ENCODE measurements at regions of chr6 and their contacts with region 1.

Region 1: DNA sequence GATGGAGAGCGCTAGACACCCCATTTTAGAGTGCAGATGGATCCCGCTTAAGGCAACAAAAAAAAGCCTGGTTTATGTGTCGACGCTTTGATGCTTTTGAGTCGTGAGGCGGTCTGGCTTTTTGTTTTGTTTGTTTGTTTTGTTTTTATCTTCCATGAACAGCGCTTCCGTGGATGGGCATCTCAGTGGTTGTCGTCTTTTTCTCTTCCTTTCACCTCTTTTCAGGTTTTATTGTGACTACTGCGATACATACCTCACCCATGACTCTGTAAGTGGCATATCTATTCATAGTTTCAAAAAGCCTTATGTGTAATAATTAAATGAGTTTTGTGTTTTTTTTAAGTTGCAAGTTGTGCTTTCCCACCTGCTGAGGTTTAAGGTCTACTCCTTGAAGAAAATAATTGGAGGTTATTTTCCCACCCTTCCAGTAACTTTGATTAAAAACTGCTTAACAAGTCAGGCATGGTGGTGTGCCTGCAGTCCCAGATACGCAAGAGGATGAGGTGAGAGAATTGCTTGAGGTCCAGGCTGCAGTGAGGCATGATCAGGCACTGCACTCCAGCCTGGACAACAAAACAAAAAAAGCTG is 476 bp downstream of the SNRPC start:
- DNase-seq: no peak
- H3K4me3 Mint-ChIP-seq: no peak overlapping the region
- H3K27ac Mint-ChIP-seq: no peak overlapping the region
- H3K4me1 Mint-ChIP-seq: peaks cover 9% of the 10 kb centered on the region
- H3K27me3 Mint-ChIP-seq: no peaks in the 10 kb centered on the region

Region 2: GRCh38 chr6:34236131-34236996 is 521.4 kb before region 1 on chr6 and contains the start of gene HMGA1:
- CTCF ChIA-PET with region 1: no interaction called
- POLR2A ChIA-PET with region 1: no interaction called
- intact Hi-C with region 1: loop called (anchors 5 kb)
- DNase-seq: peak; percentile 91
- H3K4me3 Mint-ChIP-seq: peak within 1 kb of the TSS; percentile 88
- H3K27ac Mint-ChIP-seq: peak within 1 kb of the TSS; percentile 93
- H3K4me1 Mint-ChIP-seq: peaks cover 41% of the 10 kb centered on the region
- H3K27me3 Mint-ChIP-seq: no peaks in the 10 kb centered on the region
- total RNA-seq, gene HMGA1: 422 to 429 TPM

Region 3: GRCh38 chr6:34656378-34657036 is 101.3 kb before region 1 on chr6:
- CTCF ChIA-PET with region 1: interaction called, 5 read pairs
- POLR2A ChIA-PET with region 1: interaction called, 7 read pairs
- intact Hi-C with region 1: loop called (anchors 1 kb)
- DNase-seq: peak; percentile 74
- H3K4me3 Mint-ChIP-seq: peak overlapping the region; percentile 67
- H3K27ac Mint-ChIP-seq: peak overlapping the region; percentile 93
- H3K4me1 Mint-ChIP-seq: peaks cover 54% of the 10 kb centered on the region
- H3K27me3 Mint-ChIP-seq: no peaks in the 10 kb centered on the region

Region 4: DNA sequence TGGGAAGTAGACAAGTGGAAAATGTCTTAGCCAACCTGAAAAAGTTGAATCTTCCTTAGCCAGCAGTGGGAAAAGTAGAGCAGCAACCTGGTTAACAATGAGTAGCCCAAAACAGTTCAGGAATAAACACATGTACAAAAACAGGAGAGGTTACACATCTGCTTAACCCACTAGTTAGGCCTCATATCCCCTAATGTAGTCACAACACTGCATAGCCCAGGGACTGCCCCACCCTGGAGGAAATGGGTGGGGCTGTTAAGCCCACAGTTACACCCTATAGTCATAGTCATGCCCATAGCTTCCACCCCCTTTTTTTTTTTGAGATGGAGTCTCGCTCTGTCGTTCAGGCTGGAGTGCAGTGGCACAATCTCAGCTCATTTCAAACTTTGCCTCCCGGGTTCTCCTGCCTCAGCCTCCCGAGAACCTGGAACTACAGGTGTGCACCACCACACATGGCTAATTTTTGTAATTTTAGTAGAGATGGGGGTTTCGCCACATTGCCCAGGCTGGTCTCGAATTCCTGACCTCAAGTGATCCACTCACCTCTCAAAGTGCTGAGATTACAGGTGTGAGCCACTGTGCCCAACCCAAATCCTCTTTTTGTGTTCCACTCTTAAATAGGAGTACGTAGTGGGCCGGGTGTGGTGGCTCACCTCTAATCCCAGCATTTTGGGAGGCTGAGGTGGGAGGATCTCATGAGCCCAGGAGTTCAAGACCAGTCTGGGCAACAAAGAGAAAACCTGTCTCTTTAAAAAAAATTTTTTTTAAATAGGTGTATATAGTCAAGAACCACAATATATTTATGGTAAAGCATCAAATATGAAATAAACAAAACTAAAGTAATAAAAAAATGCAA is 85.8 kb before region 1 on chr6:
- CTCF ChIA-PET with region 1: interaction called, 4 read pairs
- POLR2A ChIA-PET with region 1: interaction called, 3 read pairs
- intact Hi-C with region 1: loop called (anchors 1 kb)
- DNase-seq: peak; percentile 87
- H3K4me3 Mint-ChIP-seq: peak overlapping the region; percentile 71
- H3K27ac Mint-ChIP-seq: peak overlapping the region; percentile 92
- H3K4me1 Mint-ChIP-seq: peaks cover 60% of the 10 kb centered on the region
- H3K27me3 Mint-ChIP-seq: no peaks in the 10 kb centered on the region

Region 5: DNA sequence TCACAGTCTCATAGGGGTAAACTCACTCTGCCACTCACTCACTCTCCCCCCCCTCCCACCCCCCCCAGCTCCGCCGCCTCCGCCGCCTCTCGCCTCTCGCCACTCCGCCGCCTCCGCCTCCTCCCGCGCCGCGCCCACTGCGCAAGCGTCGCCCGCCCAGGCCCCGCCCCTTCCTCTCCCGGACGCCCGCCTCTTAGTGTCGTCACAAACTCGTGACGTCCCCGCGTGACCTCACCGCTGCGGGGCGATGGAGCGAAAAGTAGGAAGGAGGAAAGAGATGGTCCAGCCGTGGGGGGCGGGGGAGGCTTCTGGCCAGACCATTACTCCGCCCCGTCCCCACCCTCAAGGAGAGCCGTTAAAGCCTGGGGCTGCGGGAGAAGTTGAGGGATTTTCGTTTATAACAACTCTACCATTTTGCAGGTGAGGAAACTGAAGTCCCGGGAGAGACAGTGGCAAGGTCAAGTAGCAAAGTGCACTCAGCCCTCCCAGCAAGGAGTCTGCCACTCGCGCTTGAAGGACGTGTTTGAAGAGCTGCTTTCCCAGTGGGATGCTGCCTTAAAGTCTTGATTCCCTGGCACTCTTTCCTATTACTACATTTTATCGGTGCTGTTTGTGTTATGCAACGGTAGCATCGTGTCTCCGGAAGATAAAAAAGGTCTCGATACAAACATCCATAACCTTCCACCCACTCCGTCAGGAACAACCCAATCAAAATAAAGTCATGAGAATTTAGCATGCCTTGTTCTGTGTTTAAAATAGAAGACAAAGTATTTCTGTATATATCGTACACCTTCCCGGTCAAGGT is 60.8 kb before region 1 on chr6 and contains the start of gene ILRUN:
- CTCF ChIA-PET with region 1: interaction called, 7 read pairs
- POLR2A ChIA-PET with region 1: interaction called, 5 read pairs
- intact Hi-C with region 1: loop called (anchors 1 kb)
- DNase-seq: peak; percentile 97
- H3K4me3 Mint-ChIP-seq: peak within 1 kb of the TSS; percentile 87
- H3K27ac Mint-ChIP-seq: peak within 1 kb of the TSS; percentile 90
- H3K4me1 Mint-ChIP-seq: peaks cover 47% of the 10 kb centered on the region
- H3K27me3 Mint-ChIP-seq: no peaks in the 10 kb centered on the region
- total RNA-seq, gene ILRUN: 62.3 to 65.2 TPM

Region 6: DNA sequence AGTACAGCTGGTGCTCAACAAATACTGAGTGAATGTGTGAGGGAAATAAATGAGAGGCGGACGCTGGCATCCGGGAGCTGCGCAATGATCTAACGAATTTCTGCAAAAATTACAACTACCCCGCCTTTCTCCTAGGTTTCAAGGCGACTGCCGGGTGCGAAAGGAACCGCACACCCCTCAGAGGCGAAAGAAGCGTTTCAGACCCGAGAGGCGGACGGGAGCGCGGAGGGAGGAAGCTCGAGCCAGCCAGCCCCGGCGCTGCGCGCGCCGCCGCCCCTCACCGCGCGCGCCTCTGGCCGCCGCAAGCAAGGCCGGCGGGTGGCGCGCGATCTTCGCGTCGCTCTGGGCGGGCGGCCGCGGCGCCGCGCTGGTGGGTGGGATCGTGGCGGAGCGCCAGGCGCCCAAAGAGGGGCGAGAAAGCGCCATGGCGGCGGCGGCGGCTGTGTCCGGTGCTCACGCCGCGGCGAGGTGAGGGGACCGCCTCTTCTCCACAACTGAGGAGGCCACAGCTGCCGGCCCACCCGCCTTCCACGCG is 34.0 kb after region 1 on chr6 and contains the start of gene BLTP3A:
- CTCF ChIA-PET with region 1: interaction called, 8 read pairs
- POLR2A ChIA-PET with region 1: interaction called, 10 read pairs
- intact Hi-C with region 1: loop called (anchors 1 kb)
- DNase-seq: peak; percentile 82
- H3K4me3 Mint-ChIP-seq: peak within 1 kb of the TSS; percentile 91
- H3K27ac Mint-ChIP-seq: peak within 1 kb of the TSS; percentile 90
- H3K4me1 Mint-ChIP-seq: peaks cover 15% of the 10 kb centered on the region
- H3K27me3 Mint-ChIP-seq: no peaks in the 10 kb centered on the region
- total RNA-seq, gene BLTP3A: 14.1 to 14.6 TPM

Region 7: DNA sequence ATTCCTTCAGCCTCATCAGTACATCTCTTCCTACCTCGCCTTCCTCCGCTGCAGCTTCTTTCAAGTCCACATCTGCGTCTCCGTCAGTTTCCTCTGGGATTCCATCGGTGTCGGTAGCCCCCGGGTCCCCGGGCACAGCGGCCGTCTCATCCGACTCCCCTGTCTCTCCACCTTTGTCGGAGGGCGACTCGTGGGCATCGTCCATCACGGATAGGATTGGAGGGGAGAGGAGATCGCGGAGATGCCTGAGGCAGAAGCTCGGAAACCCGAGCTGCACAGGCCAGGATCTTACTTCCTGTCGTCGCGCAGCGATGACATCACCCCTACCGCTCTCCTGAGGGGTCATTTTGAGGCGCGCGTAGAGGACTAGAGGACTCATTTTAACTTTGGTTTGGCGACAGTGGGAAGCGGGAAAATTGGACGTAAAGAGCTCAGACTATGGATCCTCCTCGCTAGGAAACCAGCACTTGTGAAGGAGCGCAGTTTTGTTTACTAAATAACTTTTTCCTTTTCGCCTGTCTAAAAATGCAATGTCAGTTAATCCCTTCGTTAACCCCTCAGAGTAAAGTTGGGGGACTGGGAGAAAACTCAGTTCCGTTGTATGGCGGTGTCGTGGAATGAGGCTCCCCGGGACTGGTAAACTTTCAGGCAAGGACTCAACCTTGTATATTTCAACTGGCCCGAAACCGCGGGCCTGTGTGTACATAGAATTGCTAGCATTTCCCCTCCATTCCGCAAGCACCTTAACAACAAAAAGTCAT is 130.2 kb after region 1 on chr6 and contains the start of gene TAF11:
- CTCF ChIA-PET with region 1: interaction called, 3 read pairs
- POLR2A ChIA-PET with region 1: interaction called, 4 read pairs
- intact Hi-C with region 1: loop called (anchors 1 kb)
- DNase-seq: peak; percentile 95
- H3K4me3 Mint-ChIP-seq: peak within 1 kb of the TSS; percentile 100
- H3K27ac Mint-ChIP-seq: peak within 1 kb of the TSS; percentile 98
- H3K4me1 Mint-ChIP-seq: peaks cover 43% of the 10 kb centered on the region
- H3K27me3 Mint-ChIP-seq: no peaks in the 10 kb centered on the region
- total RNA-seq, gene TAF11: 27.2 to 29.0 TPM